Gastrocnemius medialis (tissue), 4 donors: ENCODE measurements at regions of chr9 and their contacts with region 1.

Region 1: DNA sequence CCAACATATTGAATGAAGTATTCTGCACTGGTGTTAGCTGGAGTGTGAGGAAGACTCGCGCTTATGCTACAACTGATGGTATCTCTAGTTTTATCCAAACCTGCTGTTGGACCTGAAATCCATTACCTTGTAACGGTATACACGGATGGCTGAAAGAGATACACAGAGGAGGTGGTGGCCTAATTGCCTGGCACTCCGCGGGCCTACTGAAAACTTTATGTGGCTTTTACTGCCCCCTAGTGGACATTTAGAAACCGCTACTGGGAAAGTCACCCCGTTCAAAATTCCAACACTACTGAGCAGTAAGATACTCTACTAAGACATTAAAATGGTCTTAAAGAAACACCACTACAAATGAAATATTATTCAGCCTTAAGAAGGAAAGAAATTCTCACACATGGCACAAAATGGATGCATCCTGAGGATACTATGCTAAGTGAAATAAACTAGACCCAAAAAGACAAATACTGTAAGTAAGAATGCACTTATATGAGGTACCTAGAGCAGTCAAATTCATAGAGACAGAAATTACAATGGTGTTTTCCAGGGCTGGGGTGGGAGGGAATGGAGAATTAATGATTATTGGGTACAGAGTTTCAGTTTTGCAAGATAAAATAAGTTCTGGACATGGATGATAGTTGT is 100.4 kb downstream of the TTLL11 start:
- DNase-seq: peak; percentile 58 to 76
- ATAC-seq: peak; percentile 88 to 90
- H3K4me3 ChIP-seq: no peak overlapping the region
- H3K27ac ChIP-seq: peak overlapping the region in 1 of 4 donors; percentile 30
- H3K4me1 ChIP-seq: peaks cover 30 to 32% of the 10 kb centered on the region in 2 donors
- H3K27me3 ChIP-seq: no peaks in the 10 kb centered on the region
- CTCF ChIP-seq: peak; percentile 83 to 90 (median 86)
- POLR2A ChIP-seq: no peak

Region 2: GRCh38 chr9:121609845-121610570 is 382.7 kb before region 1 on chr9:
- in situ Hi-C with region 1: no loop called
- intact Hi-C with region 1: loop called (anchors 5 kb)
- DNase-seq: peak; percentile 71 to 89
- ATAC-seq: peak; percentile 56 to 59
- H3K4me3 ChIP-seq: no peak overlapping the region
- H3K27ac ChIP-seq: peak overlapping the region; percentile 85 to 96 (median 92)
- H3K4me1 ChIP-seq: peaks cover 94 to 98% of the 10 kb centered on the region in 2 donors
- H3K27me3 ChIP-seq: no peaks in the 10 kb centered on the region
- CTCF ChIP-seq: peak in 2 of 5 experiments; percentile 10 to 44
- POLR2A ChIP-seq: no peak

Region 3: GRCh38 chr9:121692606-121693387 is 299.9 kb before region 1 on chr9:
- in situ Hi-C with region 1: loop called in 3 of 4 experiments (anchors 5 to 25 kb)
- intact Hi-C with region 1: loop called (anchors 2 kb)
- DNase-seq: no peak
- ATAC-seq: peak; percentile 28 to 60
- H3K4me3 ChIP-seq: no peak overlapping the region
- H3K27ac ChIP-seq: peak overlapping the region; percentile 41 to 63 (median 53)
- H3K4me1 ChIP-seq: peaks cover 17 to 26% of the 10 kb centered on the region in 2 donors
- H3K27me3 ChIP-seq: no peaks in the 10 kb centered on the region
- CTCF ChIP-seq: no peak
- POLR2A ChIP-seq: no peak

Region 4: GRCh38 chr9:121744002-121744686 is 248.5 kb before region 1 on chr9:
- in situ Hi-C with region 1: no loop called
- intact Hi-C with region 1: loop called (anchors 1 kb)
- DNase-seq: peak; percentile 70 to 79
- ATAC-seq: peak; percentile 64 to 65
- H3K4me3 ChIP-seq: peak overlapping the region; percentile 54 to 61 (median 56)
- H3K27ac ChIP-seq: peak overlapping the region; percentile 91 to 98 (median 94)
- H3K4me1 ChIP-seq: peaks cover 81 to 84% of the 10 kb centered on the region in 2 donors
- H3K27me3 ChIP-seq: no peaks in the 10 kb centered on the region
- CTCF ChIP-seq: peak; percentile 34 to 73 (median 58)
- POLR2A ChIP-seq: no peak

Region 5: GRCh38 chr9:121861501-121862180 is 131.1 kb before region 1 on chr9:
- in situ Hi-C with region 1: loop called in 1 of 4 experiments (anchors 10 kb)
- intact Hi-C with region 1: no loop called
- DNase-seq: peak; percentile 40 to 70
- ATAC-seq: peak; percentile 73 to 91
- H3K4me3 ChIP-seq: no peak overlapping the region
- H3K27ac ChIP-seq: peak overlapping the region in 2 of 4 donors; percentile 2 to 39
- H3K4me1 ChIP-seq: peaks cover 3 to 6% of the 10 kb centered on the region in 2 donors
- H3K27me3 ChIP-seq: no peaks in the 10 kb centered on the region
- CTCF ChIP-seq: peak; percentile 29 to 66 (median 55)
- POLR2A ChIP-seq: no peak